Heart left ventricle (tissue), 16 donors: ENCODE measurements at regions of chr1 and their contacts with region 1.

Region 1: GRCh38 chr1:202998836-202999750 is 8.1 kb upstream of the TMEM183A start:
- DNase-seq: peak in 3 of 5 donors; percentile 29 to 39 (median 33)
- ATAC-seq: peak in 3 of 4 donors; percentile 32 to 46 (median 33)
- H3K4me3 ChIP-seq: peak overlapping the region in 1 of 12 donors; percentile 13
- H3K27ac ChIP-seq: no peak overlapping the region
- H3K4me1 ChIP-seq: peaks cover 0 to 13% (median 0%) of the 10 kb centered on the region in 12 donors
- H3K27me3 ChIP-seq: peaks cover 0 to 25% (median 5%) of the 10 kb centered on the region in 9 donors
- CTCF ChIP-seq: peak; percentile 72 to 88 (median 79)
- POLR2A ChIP-seq: no peak

Region 2: GRCh38 chr1:202615501-202616354 is 383.4 kb before region 1 on chr1:
- intact Hi-C with region 1: no loop called
- DNase-seq: peak; percentile 38 to 66 (median 55)
- ATAC-seq: peak; percentile 65 to 87 (median 84)
- H3K4me3 ChIP-seq: no peak overlapping the region
- H3K27ac ChIP-seq: peak overlapping the region in 11 of 12 donors; percentile 4 to 89 (median 69)
- H3K4me1 ChIP-seq: peaks cover 4 to 54% (median 28%) of the 10 kb centered on the region in 12 donors
- H3K27me3 ChIP-seq: peaks cover 0 to 50% (median 0%) of the 10 kb centered on the region in 9 donors
- CTCF ChIP-seq: no peak
- POLR2A ChIP-seq: no peak

Region 3: GRCh38 chr1:202745323-202745888 is 253.7 kb before region 1 on chr1:
- intact Hi-C with region 1: loop called in 7 of 10 experiments (anchors 2 to 10 kb)
- DNase-seq: no peak
- ATAC-seq: no peak
- H3K4me3 ChIP-seq: no peak overlapping the region
- H3K27ac ChIP-seq: no peak overlapping the region
- H3K4me1 ChIP-seq: no peaks in the 10 kb centered on the region
- H3K27me3 ChIP-seq: no peaks in the 10 kb centered on the region
- CTCF ChIP-seq: no peak
- POLR2A ChIP-seq: no peak

Region 4: DNA sequence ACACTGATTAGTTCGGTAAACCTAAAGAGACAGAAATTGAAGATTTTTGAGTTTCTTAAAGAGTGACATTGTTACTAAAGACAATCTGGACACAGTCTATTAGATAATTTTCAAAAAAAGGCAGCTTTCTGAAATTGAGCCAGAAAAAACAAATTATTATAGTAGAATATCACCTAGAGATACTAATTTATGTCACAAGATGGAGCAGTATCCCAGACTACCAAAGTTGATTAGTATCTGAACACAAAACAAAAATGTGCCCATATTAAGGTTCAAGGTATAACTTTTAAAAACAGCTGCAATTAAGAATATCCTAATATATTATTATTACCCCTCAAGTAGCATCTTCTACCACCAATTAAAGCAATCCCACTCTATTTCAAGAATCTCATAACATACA is 248.3 kb before region 1 on chr1:
- intact Hi-C with region 1: loop called in 7 of 10 experiments (anchors 2 to 10 kb)
- DNase-seq: no peak
- ATAC-seq: no peak
- H3K4me3 ChIP-seq: no peak overlapping the region
- H3K27ac ChIP-seq: no peak overlapping the region
- H3K4me1 ChIP-seq: peaks cover 0 to 5% (median 0%) of the 10 kb centered on the region in 12 donors
- H3K27me3 ChIP-seq: no peaks in the 10 kb centered on the region
- CTCF ChIP-seq: peak in 7 of 12 donors; percentile 5 to 27 (median 20)
- POLR2A ChIP-seq: no peak

Region 5: GRCh38 chr1:202765721-202766120 is 233.4 kb before region 1 on chr1:
- intact Hi-C with region 1: loop called in 1 of 10 experiments (anchors 10 kb)
- DNase-seq: no peak
- ATAC-seq: no peak
- H3K4me3 ChIP-seq: no peak overlapping the region
- H3K27ac ChIP-seq: no peak overlapping the region
- H3K4me1 ChIP-seq: no peaks in the 10 kb centered on the region
- H3K27me3 ChIP-seq: no peaks in the 10 kb centered on the region
- CTCF ChIP-seq: no peak
- POLR2A ChIP-seq: no peak